Breast epithelium (tissue), 4 donors: ENCODE measurements at regions of chr11 and their contacts with region 1.

Region 1: GRCh38 chr11:118145285-118146227 is 7.1 kb downstream of the SCN4B start:
- DNase-seq: peak; percentile 91 to 93
- H3K4me3 ChIP-seq: peak overlapping the region; percentile 39 to 80 (median 65)
- H3K27ac ChIP-seq: peak overlapping the region; percentile 75 to 84
- H3K4me1 ChIP-seq: no peaks in the 10 kb centered on the region
- H3K27me3 ChIP-seq: peaks cover 0 to 4% of the 10 kb centered on the region in 2 donors
- CTCF ChIP-seq: peak; percentile 93 to 97 (median 95)
- POLR2A ChIP-seq: no peak

Region 2: DNA sequence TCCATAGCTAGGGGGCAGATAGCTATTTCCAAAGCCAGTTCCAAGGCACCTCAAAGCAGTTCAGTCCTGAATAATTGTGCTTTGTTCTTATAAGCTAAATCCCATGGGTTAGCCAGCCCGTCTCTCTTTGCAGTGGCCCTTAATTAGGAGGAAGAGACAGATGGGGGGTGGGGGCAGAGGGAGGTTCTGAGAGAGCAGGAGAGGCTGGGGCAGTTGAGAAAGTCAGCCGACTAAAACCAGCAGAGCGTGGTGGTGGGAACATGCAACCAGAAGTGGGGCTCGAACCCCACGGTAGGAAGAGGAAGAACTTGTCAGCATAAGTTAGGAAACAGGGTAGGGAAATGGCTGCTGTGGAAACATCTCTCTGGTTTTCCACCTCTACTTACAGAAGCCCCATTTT is 17.9 kb after region 1 on chr11:
- intact Hi-C with region 1: loop called (anchors 1 kb)
- DNase-seq: no peak
- H3K4me3 ChIP-seq: no peak overlapping the region
- H3K27ac ChIP-seq: no peak overlapping the region
- H3K4me1 ChIP-seq: no peaks in the 10 kb centered on the region
- H3K27me3 ChIP-seq: no peaks in the 10 kb centered on the region
- CTCF ChIP-seq: no peak
- POLR2A ChIP-seq: no peak

Region 3: GRCh38 chr11:119759324-119759723 is 1613.8 kb after region 1 on chr11:
- intact Hi-C with region 1: loop called (anchors 5 kb)
- DNase-seq: no peak
- H3K4me3 ChIP-seq: no peak overlapping the region
- H3K27ac ChIP-seq: no peak overlapping the region
- H3K4me1 ChIP-seq: no peaks in the 10 kb centered on the region
- H3K27me3 ChIP-seq: peaks cover 0 to 6% of the 10 kb centered on the region in 2 donors
- CTCF ChIP-seq: no peak
- POLR2A ChIP-seq: no peak